ENCODE measurements at regions of chr11 and their contacts with region 1.

Region 1: GRCh38 chr11:128522055-128522942 is 65.1 kb downstream of the ETS1 start:
- DNase-seq: peak; percentile 95
- ATAC-seq: peak; percentile 79
- H3K4me3 Mint-ChIP-seq: peak overlapping the region; percentile 98
- H3K27ac Mint-ChIP-seq: peak overlapping the region; percentile 97
- H3K4me1 Mint-ChIP-seq: peaks cover 45% of the 10 kb centered on the region
- H3K27me3 Mint-ChIP-seq: no peaks in the 10 kb centered on the region

Region 2: DNA sequence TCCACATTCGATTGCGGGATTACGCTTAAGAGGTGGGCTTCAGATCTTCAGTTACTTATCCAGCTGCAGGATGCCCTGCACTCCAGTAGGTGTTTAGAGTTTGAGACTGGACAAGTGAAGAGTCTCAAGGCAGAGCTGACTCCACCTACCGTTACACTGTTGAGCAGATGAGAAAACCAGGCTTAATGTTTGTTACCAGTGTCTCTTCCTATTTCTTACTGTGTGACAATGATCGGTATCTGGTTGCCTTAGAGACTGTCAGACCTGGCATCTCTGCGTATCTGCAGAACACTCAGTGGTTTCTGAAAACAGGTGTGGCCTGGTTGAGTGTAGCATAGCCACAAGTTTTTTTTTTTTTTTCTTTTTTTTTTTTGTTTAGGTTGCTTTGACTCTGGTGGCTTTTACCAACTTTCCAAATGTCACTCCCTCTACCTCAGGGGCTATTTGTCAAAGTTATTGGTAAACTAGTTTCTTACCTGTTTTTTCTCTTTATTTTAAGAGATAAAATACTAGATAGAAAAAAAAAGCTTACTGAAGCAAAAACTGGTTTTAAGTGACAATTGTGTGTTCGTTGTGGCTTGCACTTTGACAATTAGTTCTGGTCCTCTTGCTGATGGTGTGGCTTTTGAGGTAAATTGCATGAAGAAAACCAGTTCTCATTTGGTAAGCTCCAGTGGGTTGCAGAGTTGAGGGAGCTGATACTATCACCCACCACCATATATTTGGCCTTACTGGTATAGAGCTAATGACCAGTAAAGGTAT is 219.7 kb before region 1 on chr11:
- POLR2A ChIA-PET with region 1: interaction called, 160 read pairs
- DNase-seq: no peak
- ATAC-seq: peak; percentile 90
- H3K4me3 Mint-ChIP-seq: peak overlapping the region; percentile 91
- H3K27ac Mint-ChIP-seq: peak overlapping the region; percentile 96
- H3K4me1 Mint-ChIP-seq: peaks cover 66% of the 10 kb centered on the region
- H3K27me3 Mint-ChIP-seq: no peaks in the 10 kb centered on the region

Region 3: GRCh38 chr11:128472128-128473089 is 49.9 kb before region 1 on chr11:
- POLR2A ChIA-PET with region 1: interaction called, 612 read pairs
- DNase-seq: no peak
- ATAC-seq: peak; percentile 49
- H3K4me3 Mint-ChIP-seq: peak overlapping the region; percentile 74
- H3K27ac Mint-ChIP-seq: peak overlapping the region; percentile 97
- H3K4me1 Mint-ChIP-seq: peaks cover 88% of the 10 kb centered on the region
- H3K27me3 Mint-ChIP-seq: no peaks in the 10 kb centered on the region

Region 4: DNA sequence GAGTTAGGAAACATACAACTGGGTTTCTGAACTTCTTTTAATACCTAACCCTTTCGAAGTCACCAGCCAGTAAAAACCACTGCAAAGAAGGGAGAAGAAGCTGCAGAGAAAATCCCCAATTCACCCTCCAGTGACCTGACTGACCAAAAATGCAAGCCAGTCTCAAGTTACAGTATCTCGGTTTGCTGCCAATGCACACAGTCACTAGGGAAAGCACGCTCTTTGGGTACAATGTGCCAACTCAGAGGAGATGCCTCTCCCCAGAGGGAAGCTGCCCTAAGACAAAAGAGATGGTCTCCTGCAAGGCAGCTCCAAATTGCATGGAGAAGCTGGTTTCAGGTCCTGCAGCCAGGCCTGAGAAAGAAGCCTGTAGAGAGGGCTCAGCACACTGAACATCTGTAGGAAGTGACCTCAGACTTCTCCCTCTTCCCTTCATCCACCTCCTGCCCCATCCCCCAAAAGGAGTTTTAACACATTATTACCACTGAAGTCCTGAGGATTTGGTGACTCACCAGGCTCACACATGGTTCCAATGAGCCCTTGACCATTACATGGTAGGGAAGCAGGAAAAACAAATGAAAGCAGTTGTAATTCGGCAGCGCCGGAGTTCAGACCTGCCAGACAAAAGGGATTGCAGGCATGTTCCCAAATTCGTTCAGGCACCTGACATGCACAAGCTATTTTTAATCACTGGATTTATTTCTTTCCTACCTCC is 25.1 kb before region 1 on chr11:
- POLR2A ChIA-PET with region 1: interaction called, 716 read pairs
- DNase-seq: peak; percentile 36
- ATAC-seq: no peak
- H3K4me3 Mint-ChIP-seq: peak overlapping the region; percentile 78
- H3K27ac Mint-ChIP-seq: peak overlapping the region; percentile 93
- H3K4me1 Mint-ChIP-seq: peaks cover 93% of the 10 kb centered on the region
- H3K27me3 Mint-ChIP-seq: no peaks in the 10 kb centered on the region

Region 5: DNA sequence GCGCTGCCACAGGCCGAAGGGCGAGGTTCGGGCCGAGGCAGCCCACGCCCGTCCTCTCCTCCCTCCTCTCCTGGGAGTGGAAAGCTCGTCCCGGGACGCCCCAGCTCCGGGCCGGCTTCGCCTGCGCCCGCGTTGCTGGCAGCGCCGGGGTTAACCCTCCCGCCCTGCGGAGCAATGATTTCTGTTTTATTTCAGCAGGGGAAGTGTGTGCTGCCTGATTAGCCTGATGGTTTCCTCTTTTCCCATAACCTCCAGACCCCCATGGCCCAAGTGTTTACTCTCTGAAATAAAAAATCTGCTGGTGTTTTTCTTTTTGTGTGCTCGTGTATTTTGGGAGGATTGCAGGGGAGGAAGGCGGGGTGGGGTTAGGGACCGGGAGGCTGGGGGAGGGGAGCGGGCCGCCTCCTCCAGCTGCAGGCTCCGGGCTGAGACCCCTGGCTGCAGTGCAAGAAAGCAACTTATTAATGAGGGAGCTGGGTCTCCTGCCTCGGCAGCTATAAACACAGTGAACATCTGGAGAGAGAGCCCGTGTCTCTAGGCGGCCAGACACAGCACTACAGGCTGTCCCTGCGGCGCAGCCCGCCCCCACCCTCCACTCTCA is 26.5 kb after region 1 on chr11:
- POLR2A ChIA-PET with region 1: interaction called, 65 read pairs
- DNase-seq: peak; percentile 63
- ATAC-seq: peak; percentile 48
- H3K4me3 Mint-ChIP-seq: peak overlapping the region; percentile 85
- H3K27ac Mint-ChIP-seq: peak overlapping the region; percentile 92
- H3K4me1 Mint-ChIP-seq: peaks cover 69% of the 10 kb centered on the region
- H3K27me3 Mint-ChIP-seq: no peaks in the 10 kb centered on the region

Region 6: DNA sequence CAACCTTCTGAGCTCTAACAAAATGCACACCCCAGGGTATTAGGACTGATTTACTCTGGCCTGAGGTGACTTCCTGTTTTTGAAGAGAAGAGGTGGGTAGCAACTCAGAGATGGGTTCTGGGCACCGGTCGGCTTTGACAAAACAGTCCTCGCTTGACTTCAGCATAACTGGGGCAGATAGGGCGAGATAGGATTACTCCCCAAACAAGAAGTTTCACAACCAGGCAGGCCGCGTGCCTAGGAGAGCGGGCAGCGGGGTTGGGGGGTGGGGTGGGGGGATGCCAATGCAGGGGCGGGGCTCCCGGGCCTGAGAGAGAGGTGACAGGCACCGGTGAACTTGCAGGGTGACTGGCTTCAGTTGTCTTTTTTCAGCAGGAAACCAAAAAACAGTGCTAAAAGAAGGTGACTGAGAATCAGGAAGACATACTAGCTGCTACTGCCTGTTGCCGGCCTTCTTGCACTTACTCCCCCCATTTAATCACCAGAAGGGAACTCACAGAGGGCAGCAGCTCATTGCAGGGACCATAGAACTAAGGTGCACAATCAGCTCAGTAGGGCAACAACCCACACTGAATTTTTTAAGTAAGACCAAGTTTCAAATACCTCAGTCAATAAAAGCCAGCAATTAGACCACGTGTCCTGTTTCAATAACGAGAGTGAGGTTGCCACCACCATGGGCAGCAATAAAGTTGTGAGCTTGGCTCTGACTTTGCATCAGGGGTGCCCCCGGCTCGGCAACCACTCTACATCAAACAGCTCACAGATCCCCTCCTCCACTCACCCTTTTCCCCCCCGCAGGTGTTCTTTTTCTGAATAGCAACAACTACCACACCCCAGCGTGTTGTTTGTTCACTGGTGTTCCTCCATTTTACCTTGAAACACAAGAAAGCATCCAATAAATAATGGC is 102.2 kb after region 1 on chr11:
- POLR2A ChIA-PET with region 1: interaction called, 56 read pairs
- DNase-seq: peak; percentile 72
- ATAC-seq: peak; percentile 65
- H3K4me3 Mint-ChIP-seq: peak overlapping the region; percentile 77
- H3K27ac Mint-ChIP-seq: peak overlapping the region; percentile 92
- H3K4me1 Mint-ChIP-seq: peaks cover 69% of the 10 kb centered on the region
- H3K27me3 Mint-ChIP-seq: no peaks in the 10 kb centered on the region

Measured in activated naive CD8-positive, alpha-beta T cell treated with anti-CD3 and anti-CD28 coated beads, Interleukin-2, amount 10 ng/mL, durations not matched to agents 7 days and 5 days (primary cell).